ENCODE measurements at regions of chr1 and their contacts with region 1.

Region 1: DNA sequence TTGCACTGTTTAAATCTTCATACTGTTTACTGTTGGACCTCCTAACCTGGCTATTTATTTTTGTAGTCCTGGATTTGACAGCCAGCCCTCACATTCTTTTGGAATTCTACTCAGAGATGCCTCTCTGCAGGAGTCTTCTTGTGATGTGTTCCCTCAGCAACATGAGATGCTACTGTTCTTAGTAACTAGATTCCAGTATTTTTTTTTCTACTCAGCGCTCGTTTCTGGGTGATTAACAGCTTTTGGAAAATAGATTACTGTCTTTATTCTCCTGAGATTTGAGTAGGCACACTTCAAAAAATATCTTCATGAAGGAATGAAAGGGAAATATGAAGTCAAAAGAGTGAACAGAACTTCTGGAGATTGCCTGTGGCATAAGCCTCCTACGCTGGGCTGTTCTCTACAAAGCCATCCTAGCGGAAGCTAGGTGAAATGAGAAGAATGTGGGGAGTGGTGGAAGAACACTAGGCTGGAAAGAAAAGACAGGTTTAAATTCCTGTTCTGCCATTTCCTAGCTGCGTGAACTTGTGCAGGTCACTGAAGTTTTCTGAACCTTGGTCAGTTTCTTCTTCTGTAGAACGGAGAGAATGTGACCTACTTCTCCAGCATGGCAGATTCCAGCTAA is 75.9 kb downstream of the LRRC8C start:
- DNase-seq: no peak
- H3K4me3 ChIP-seq: no peak overlapping the region
- H3K27ac ChIP-seq: peak overlapping the region; percentile 97
- H3K4me1 ChIP-seq: peaks cover 43% of the 10 kb centered on the region
- H3K27me3 ChIP-seq: no peaks in the 10 kb centered on the region
- CTCF ChIP-seq: no peak
- POLR2A ChIP-seq: no peak

Region 2: GRCh38 chr1:89692601-89693521 is 16.0 kb before region 1 on chr1:
- CTCF ChIA-PET with region 1: interaction called, 4 read pairs
- POLR2A ChIA-PET with region 1: interaction called, 5 read pairs
- dilution Hi-C with region 1: no loop called
- intact Hi-C with region 1: loop called (anchors 1 kb)
- DNase-seq: peak; percentile 96
- H3K4me3 ChIP-seq: no peak overlapping the region
- H3K27ac ChIP-seq: peak overlapping the region; percentile 86
- H3K4me1 ChIP-seq: peaks cover 57% of the 10 kb centered on the region
- H3K27me3 ChIP-seq: no peaks in the 10 kb centered on the region
- CTCF ChIP-seq: no peak
- POLR2A ChIP-seq: peak; percentile 76

Region 3: GRCh38 chr1:89698624-89699023 is 10.2 kb before region 1 on chr1:
- CTCF ChIA-PET with region 1: interaction called, 4 read pairs
- POLR2A ChIA-PET with region 1: interaction called, 5 read pairs
- dilution Hi-C with region 1: no loop called
- intact Hi-C with region 1: loop called (anchors 1 kb)
- DNase-seq: peak; percentile 85
- H3K4me3 ChIP-seq: no peak overlapping the region
- H3K27ac ChIP-seq: peak overlapping the region; percentile 54
- H3K4me1 ChIP-seq: peaks cover 60% of the 10 kb centered on the region
- H3K27me3 ChIP-seq: no peaks in the 10 kb centered on the region
- CTCF ChIP-seq: no peak
- POLR2A ChIP-seq: no peak

Region 4: DNA sequence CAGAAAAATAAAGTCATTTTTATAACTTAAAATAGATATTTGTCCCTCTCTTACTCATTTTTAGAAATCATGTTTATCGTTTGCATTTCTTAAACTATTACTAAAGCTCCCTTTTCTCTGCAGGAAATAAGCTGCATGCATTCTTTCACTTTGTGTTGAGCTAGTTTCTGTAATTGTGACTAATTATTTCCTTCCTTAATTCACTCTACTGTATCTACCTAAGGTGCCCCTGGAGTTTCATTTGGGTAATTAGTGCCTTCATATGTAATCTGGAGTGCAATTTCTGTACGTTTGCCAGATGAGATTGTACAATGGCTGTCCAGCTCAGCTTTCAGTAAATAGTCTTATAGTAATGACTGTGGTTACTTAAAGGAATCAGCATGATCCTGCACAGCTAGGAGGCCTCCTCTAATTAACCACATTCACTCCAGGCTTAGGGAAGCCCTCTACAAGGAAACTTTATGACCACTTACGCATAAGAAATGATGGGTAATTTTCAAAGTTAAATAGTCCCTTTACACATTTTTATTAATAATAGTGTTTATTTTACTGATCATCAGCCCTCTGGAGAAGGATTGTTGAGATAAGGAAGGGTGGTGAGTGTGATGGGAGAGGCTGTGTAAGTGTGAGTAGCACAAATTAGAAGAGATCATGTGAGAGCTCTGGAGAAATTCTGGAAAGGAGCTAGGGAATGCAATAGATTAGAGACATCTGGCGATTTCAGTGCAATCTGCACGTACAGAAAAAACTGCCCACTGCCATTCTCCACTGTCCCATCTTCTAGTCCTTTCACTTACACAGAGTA is 10.8 kb after region 1 on chr1:
- CTCF ChIA-PET with region 1: interaction called, 4 read pairs
- POLR2A ChIA-PET with region 1: no interaction called
- dilution Hi-C with region 1: no loop called
- intact Hi-C with region 1: loop called (anchors 1 kb)
- DNase-seq: peak; percentile 89
- H3K4me3 ChIP-seq: peak overlapping the region in 2 of 3 experiments; percentile 16 to 52
- H3K27ac ChIP-seq: peak overlapping the region; percentile 76
- H3K4me1 ChIP-seq: peaks cover 75% of the 10 kb centered on the region
- H3K27me3 ChIP-seq: no peaks in the 10 kb centered on the region
- CTCF ChIP-seq: no peak
- POLR2A ChIP-seq: no peak

Region 5: GRCh38 chr1:89757532-89757931 is 48.7 kb after region 1 on chr1:
- CTCF ChIA-PET with region 1: interaction called, 10 read pairs
- POLR2A ChIA-PET with region 1: no interaction called
- dilution Hi-C with region 1: no loop called
- intact Hi-C with region 1: loop called (anchors 1 kb)
- DNase-seq: peak; percentile 85
- H3K4me3 ChIP-seq: peak overlapping the region in 1 of 3 experiments; percentile 23
- H3K27ac ChIP-seq: peak overlapping the region; percentile 49
- H3K4me1 ChIP-seq: peaks cover 51% of the 10 kb centered on the region
- H3K27me3 ChIP-seq: no peaks in the 10 kb centered on the region
- CTCF ChIP-seq: no peak
- POLR2A ChIP-seq: no peak

Region 6: DNA sequence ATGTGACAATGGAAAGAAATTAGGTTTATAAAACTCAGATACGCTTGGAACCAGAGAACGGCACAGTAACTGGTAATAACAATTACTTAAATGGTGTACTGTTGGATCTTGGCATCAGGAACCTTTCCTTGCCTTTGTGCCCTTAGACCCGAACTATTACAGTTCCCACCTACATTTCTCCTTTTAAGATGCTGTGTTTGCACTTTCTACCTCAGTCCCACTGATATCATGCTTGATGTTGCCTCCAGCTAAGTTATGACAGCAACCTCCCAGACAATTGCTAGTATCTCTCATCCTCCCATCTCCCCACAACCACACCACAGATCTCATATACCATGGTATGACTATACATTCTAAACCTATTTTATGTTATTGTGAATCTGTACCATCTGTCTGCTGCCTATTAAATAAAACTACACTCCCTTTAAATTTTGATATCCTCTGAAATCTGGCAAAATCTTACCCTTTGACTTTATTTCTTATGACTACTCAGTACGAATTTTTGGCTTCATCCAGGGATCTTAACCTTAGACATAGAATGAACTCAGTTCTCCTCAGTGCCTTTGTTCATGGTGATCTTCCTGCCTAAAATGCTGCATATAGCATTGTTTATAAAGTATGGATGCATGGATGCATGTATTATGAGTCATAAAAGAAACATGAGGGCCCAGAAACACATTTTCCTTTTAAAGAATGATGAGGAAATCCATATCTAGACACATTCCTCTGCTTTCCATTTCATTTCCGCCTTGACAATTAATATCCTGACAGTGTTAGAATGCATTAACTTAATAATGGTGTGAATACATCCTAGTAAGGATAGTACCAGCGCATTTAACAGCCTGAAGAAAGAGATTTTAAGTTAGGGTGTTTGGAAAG is 176.1 kb after region 1 on chr1:
- CTCF ChIA-PET with region 1: no interaction called
- POLR2A ChIA-PET with region 1: no interaction called
- dilution Hi-C with region 1: no loop called
- intact Hi-C with region 1: loop called (anchors 5 kb)
- DNase-seq: peak; percentile 87
- H3K4me3 ChIP-seq: peak overlapping the region in 1 of 3 experiments; percentile 23
- H3K27ac ChIP-seq: peak overlapping the region; percentile 80
- H3K4me1 ChIP-seq: peaks cover 48% of the 10 kb centered on the region
- H3K27me3 ChIP-seq: no peaks in the 10 kb centered on the region
- CTCF ChIP-seq: no peak
- POLR2A ChIP-seq: no peak

Measured in endothelial cell of umbilical vein (primary cell).